ENCODE measurements at regions of chr5 and their contacts with region 1.

Region 1: DNA sequence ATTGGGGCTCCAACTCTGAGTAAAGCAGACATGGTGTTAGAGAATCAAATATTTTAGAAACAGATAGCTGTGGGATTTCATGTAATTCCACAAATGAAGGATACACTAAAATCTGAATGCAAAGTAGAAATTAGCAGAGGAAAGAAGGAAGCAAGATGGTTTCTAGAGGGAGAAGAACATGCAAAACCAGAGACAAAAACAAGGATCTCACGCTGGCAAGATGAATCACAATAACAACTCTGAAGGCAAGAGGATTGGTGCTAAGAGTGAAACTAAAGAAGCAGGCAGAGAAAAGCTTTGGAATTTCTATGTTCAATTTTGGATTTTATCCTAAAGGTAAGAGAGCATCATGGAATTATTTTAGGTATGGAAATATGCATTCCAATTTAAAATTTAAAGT is 857.2 kb upstream of the COX7C start:
- DNase-seq: no peak

Region 2: GRCh38 chr5:85556464-85556863 is 204.1 kb before region 1 on chr5:
- intact Hi-C with region 1: no loop called
- DNase-seq: peak; percentile 69

Region 3: DNA sequence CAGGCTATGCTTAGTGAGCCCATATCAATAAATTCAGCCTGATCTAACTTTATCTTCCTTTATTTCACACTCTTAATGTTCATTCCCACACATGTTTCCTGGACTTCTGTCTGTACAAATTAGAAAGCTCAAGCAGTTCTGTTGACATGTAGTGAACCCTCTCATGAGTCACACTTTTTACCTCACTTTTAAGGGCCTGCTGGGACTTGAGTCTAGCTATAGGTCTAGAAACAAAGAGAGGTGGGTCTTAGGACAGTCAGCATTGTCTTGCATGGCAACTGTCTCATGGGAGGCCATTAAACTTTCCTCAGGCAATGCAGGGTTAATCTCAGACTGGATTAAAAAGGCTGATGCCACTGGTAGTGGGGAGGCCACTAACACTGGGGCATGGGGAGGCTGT is 1660.8 kb after region 1 on chr5:
- intact Hi-C with region 1: loop called in 1 of 2 experiments (anchors 10 kb)
- DNase-seq: no peak

Measured in posterior vena cava (tissue), 2 donors.